MCF 10A (cell line): ENCODE measurements at regions of chr11 and their contacts with region 1.

Region 1: GRCh38 chr11:32434356-32435151 is 785 bp downstream of the WT1 start:
- DNase-seq: peak; percentile 29
- H3K4me3 Mint-ChIP-seq: peak overlapping the region; percentile 47
- H3K27ac Mint-ChIP-seq: no peak overlapping the region
- H3K4me1 Mint-ChIP-seq: no peaks in the 10 kb centered on the region
- H3K27me3 Mint-ChIP-seq: peaks cover 2% of the 10 kb centered on the region
- CTCF ChIP-seq: no peak

Region 2: GRCh38 chr11:32400196-32400595 is 34.4 kb before region 1 on chr11:
- CTCF ChIA-PET with region 1: no interaction called
- POLR2A ChIA-PET with region 1: no interaction called
- intact Hi-C with region 1: no loop called
- DNase-seq: peak; percentile 29
- H3K4me3 Mint-ChIP-seq: no peak overlapping the region
- H3K27ac Mint-ChIP-seq: no peak overlapping the region
- H3K4me1 Mint-ChIP-seq: no peaks in the 10 kb centered on the region
- H3K27me3 Mint-ChIP-seq: no peaks in the 10 kb centered on the region
- CTCF ChIP-seq: no peak

Region 3: GRCh38 chr11:32418836-32419235 is 15.7 kb before region 1 on chr11:
- CTCF ChIA-PET with region 1: interaction called, 13 read pairs
- POLR2A ChIA-PET with region 1: no interaction called
- intact Hi-C with region 1: no loop called
- DNase-seq: no peak
- H3K4me3 Mint-ChIP-seq: no peak overlapping the region
- H3K27ac Mint-ChIP-seq: no peak overlapping the region
- H3K4me1 Mint-ChIP-seq: no peaks in the 10 kb centered on the region
- H3K27me3 Mint-ChIP-seq: no peaks in the 10 kb centered on the region
- CTCF ChIP-seq: no peak

Region 4: DNA sequence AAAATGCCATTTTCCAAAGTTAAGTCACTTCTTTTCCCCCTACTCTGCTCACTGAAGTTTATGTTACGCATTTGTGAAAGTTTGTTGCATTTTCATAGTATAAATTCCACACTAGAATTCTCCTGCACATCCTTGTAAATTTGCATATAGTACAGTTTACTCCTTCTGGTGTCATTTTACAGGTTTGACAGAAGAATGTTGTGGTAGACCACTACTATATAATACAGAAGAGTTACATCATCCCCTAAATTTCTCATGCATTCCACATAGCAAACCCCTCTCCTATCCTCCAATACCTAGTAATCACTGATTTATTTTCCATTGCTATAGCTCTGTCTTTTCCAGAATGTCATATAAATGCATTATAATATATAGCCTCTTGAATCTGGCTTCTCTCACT is 295.4 kb after region 1 on chr11:
- CTCF ChIA-PET with region 1: no interaction called
- POLR2A ChIA-PET with region 1: no interaction called
- intact Hi-C with region 1: no loop called
- DNase-seq: no peak
- H3K4me3 Mint-ChIP-seq: no peak overlapping the region
- H3K27ac Mint-ChIP-seq: no peak overlapping the region
- H3K4me1 Mint-ChIP-seq: no peaks in the 10 kb centered on the region
- H3K27me3 Mint-ChIP-seq: peaks cover 11% of the 10 kb centered on the region
- CTCF ChIP-seq: no peak